ENCODE measurements at regions of chr5 and their contacts with region 1.

Region 1: GRCh38 chr5:72319976-72320752 is at the starts of genes MRPS27 and PTCD2:
- DNase-seq: peak; percentile 93
- H3K4me3 Mint-ChIP-seq: peak within 1 kb of the TSS; percentile 95
- H3K27ac Mint-ChIP-seq: peak within 1 kb of the TSS; percentile 83
- H3K4me1 Mint-ChIP-seq: peaks cover 41% of the 10 kb centered on the region
- H3K27me3 Mint-ChIP-seq: no peaks in the 10 kb centered on the region
- total RNA-seq, gene MRPS27: 80.1 and 88.2 TPM in 2 replicates
- total RNA-seq, gene PTCD2: 13.2 and 16.9 TPM in 2 replicates

Region 2: GRCh38 chr5:71586941-71587765 is 733.0 kb before region 1 on chr5 and contains the start of gene MCCC2:
- intact Hi-C with region 1: loop called (anchors 5 kb)
- DNase-seq: peak; percentile 96
- H3K4me3 Mint-ChIP-seq: peak within 1 kb of the TSS; percentile 95
- H3K27ac Mint-ChIP-seq: peak within 1 kb of the TSS; percentile 99
- H3K4me1 Mint-ChIP-seq: peaks cover 36% of the 10 kb centered on the region
- H3K27me3 Mint-ChIP-seq: no peaks in the 10 kb centered on the region
- total RNA-seq, gene MCCC2: 49.8 and 53.8 TPM in 2 replicates

Region 3: DNA sequence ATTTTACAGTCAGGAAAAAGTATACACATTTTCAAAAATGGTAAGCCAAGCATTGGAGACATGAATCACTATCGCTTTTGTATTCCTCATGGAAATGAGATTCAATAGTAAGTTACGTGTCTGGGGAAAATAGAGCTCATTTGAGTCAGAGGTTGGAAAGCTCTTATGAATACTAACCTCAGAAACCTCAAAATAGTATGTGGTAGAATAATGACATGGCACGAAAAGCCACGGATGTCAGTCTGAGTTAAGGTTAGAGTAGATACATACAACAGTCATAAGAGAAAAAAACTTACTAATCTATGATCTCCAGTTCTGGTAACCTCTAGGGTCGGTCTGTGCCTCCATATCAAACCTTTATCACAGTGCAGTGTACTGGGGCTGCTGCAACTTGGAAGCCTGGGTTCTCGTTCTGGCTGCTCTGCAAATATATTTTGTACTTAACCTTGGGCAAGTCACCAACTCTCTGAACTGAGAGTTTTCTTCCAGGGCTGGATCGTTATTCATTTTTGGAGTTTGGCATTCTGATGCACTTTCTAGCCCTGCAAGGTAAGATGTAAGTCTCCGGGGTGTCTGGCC is 181.1 kb before region 1 on chr5:
- intact Hi-C with region 1: loop called (anchors 5 kb)
- DNase-seq: no peak
- H3K4me3 Mint-ChIP-seq: no peak overlapping the region
- H3K27ac Mint-ChIP-seq: no peak overlapping the region
- H3K4me1 Mint-ChIP-seq: peaks cover 12% of the 10 kb centered on the region
- H3K27me3 Mint-ChIP-seq: peaks cover 35% of the 10 kb centered on the region

Region 4: GRCh38 chr5:72234265-72234700 is 85.9 kb before region 1 on chr5:
- intact Hi-C with region 1: loop called (anchors 1 kb)
- DNase-seq: peak; percentile 12
- H3K4me3 Mint-ChIP-seq: peak overlapping the region; percentile 32
- H3K27ac Mint-ChIP-seq: no peak overlapping the region
- H3K4me1 Mint-ChIP-seq: peaks cover 29% of the 10 kb centered on the region
- H3K27me3 Mint-ChIP-seq: peaks cover 15% of the 10 kb centered on the region

Region 5: GRCh38 chr5:72347801-72348305 is 27.7 kb after region 1 on chr5:
- intact Hi-C with region 1: loop called (anchors 1 kb)
- DNase-seq: no peak
- H3K4me3 Mint-ChIP-seq: no peak overlapping the region
- H3K27ac Mint-ChIP-seq: peak overlapping the region; percentile 44
- H3K4me1 Mint-ChIP-seq: peaks cover 28% of the 10 kb centered on the region
- H3K27me3 Mint-ChIP-seq: no peaks in the 10 kb centered on the region

Region 6: DNA sequence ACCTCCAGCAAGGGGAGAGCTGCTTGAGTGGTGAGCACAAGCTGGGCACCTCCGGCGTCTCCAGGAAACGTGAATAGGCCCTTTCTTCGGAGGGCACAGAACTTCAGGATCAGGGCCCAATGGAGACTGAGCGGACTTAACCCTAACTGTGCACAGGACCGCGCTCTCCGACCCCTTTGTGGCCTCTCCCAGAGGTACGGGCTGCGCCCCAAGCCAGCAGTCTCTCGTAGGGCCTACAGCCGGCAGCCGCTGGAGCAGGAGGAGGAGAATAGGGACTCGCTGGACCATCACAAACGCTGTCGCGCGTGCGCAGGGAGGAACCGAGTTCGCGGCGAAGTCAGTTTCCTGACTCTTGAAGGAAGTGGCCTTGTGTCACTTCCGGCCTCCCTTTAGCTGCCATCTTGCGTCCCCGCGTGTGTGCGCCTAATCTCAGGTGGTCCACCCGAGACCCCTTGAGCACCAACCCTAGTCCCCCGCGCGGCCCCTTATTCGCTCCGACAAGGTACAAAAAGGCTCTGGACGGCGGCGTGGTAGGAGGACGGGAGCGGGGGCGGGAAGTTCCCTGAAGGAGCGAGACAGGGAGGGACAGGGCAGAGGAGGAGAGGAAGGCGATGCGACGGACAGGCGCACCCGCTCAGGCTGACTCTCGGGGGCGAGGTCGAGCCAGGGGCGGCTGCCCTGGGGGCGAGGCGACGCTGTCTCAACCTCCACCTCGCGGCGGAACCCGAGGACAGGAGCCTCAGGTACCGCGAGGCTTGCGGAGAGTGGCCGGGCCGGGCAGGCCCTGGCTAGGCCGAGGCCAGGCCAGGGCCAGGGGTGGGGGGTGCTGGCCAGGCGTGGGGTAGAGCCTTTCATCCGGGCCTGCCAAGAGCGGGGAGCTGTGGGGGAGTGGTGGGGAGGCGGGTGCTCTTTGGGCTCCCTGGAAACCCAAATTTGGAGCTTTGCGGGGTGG is 1178.2 kb after region 1 on chr5 and contains the start of gene BTF3:
- intact Hi-C with region 1: loop called (anchors 10 kb)
- DNase-seq: peak; percentile 92
- H3K4me3 Mint-ChIP-seq: peak within 1 kb of the TSS; percentile 99
- H3K27ac Mint-ChIP-seq: peak within 1 kb of the TSS; percentile 99
- H3K4me1 Mint-ChIP-seq: peaks cover 39% of the 10 kb centered on the region
- H3K27me3 Mint-ChIP-seq: peaks cover 12% of the 10 kb centered on the region
- total RNA-seq, gene BTF3: 913 and 929 TPM in 2 replicates